CD8-positive, alpha-beta T cell (primary cell): ENCODE measurements at regions of chr2 and their contacts with region 1.

Region 1: GRCh38 chr2:240851078-240851991 is 17.3 kb upstream of the AGXT start:
- DNase-seq: peak; percentile 73 to 91 (median 81)
- ATAC-seq: peak; percentile 95
- H3K4me3 ChIP-seq: no peak overlapping the region
- H3K4me3 Mint-ChIP-seq: no peak overlapping the region
- H3K27ac ChIP-seq: no peak overlapping the region
- H3K27ac Mint-ChIP-seq: no peak overlapping the region
- H3K4me1 ChIP-seq: no peaks in the 10 kb centered on the region
- H3K4me1 Mint-ChIP-seq: no peaks in the 10 kb centered on the region
- H3K27me3 ChIP-seq: peaks cover 0 to 2% of the 10 kb centered on the region in 2 experiments
- H3K27me3 Mint-ChIP-seq: peaks cover 4% of the 10 kb centered on the region
- CTCF ChIP-seq: peak; percentile 91

Region 2: GRCh38 chr2:240704651-240705050 is 146.7 kb before region 1 on chr2:
- CTCF ChIA-PET with region 1: no interaction called
- POLR2A ChIA-PET with region 1: no interaction called
- intact Hi-C with region 1: no loop called
- DNase-seq: peak in 5 of 9 experiments; percentile 39 to 65 (median 46)
- ATAC-seq: peak; percentile 63
- H3K4me3 ChIP-seq: peak overlapping the region in 1 of 2 experiments; percentile 41
- H3K4me3 Mint-ChIP-seq: peak overlapping the region; percentile 47
- H3K27ac ChIP-seq: no peak overlapping the region
- H3K27ac Mint-ChIP-seq: no peak overlapping the region
- H3K4me1 ChIP-seq: peaks cover 20% of the 10 kb centered on the region
- H3K4me1 Mint-ChIP-seq: peaks cover 14% of the 10 kb centered on the region
- H3K27me3 ChIP-seq: no peaks in the 10 kb centered on the region
- H3K27me3 Mint-ChIP-seq: peaks cover 9% of the 10 kb centered on the region
- CTCF ChIP-seq: no peak

Region 3: GRCh38 chr2:240840435-240841080 is 10.8 kb before region 1 on chr2:
- CTCF ChIA-PET with region 1: interaction called, 14 read pairs
- POLR2A ChIA-PET with region 1: no interaction called
- intact Hi-C with region 1: no loop called
- DNase-seq: peak in 3 of 9 experiments; percentile 27 to 49 (median 30)
- ATAC-seq: no peak
- H3K4me3 ChIP-seq: no peak overlapping the region
- H3K4me3 Mint-ChIP-seq: no peak overlapping the region
- H3K27ac ChIP-seq: no peak overlapping the region
- H3K27ac Mint-ChIP-seq: no peak overlapping the region
- H3K4me1 ChIP-seq: no peaks in the 10 kb centered on the region
- H3K4me1 Mint-ChIP-seq: no peaks in the 10 kb centered on the region
- H3K27me3 ChIP-seq: no peaks in the 10 kb centered on the region
- H3K27me3 Mint-ChIP-seq: peaks cover 4% of the 10 kb centered on the region
- CTCF ChIP-seq: peak; percentile 33

Region 4: DNA sequence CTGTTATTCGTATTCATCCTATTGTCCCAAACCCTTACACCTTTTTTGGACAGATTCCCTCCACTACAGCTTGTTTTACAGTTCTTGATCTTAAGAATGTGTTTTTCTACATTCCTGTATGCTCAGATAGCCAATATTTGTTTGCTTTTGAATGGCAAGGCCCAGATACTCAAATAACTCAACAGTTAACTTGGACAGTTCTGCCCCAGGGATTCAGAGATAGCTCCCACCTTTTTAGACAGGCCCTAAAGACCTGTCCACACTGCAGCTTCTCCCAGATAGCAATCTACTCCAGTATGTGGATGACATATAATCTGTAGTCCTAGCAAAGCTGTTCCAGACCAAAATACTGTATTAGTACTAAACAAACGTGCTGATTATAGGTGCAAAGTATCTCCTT is 10.2 kb after region 1 on chr2:
- CTCF ChIA-PET with region 1: interaction called, 26 read pairs
- POLR2A ChIA-PET with region 1: no interaction called
- intact Hi-C with region 1: no loop called
- DNase-seq: no peak
- ATAC-seq: no peak
- H3K4me3 ChIP-seq: no peak overlapping the region
- H3K4me3 Mint-ChIP-seq: no peak overlapping the region
- H3K27ac ChIP-seq: no peak overlapping the region
- H3K27ac Mint-ChIP-seq: no peak overlapping the region
- H3K4me1 ChIP-seq: no peaks in the 10 kb centered on the region
- H3K4me1 Mint-ChIP-seq: no peaks in the 10 kb centered on the region
- H3K27me3 ChIP-seq: no peaks in the 10 kb centered on the region
- H3K27me3 Mint-ChIP-seq: no peaks in the 10 kb centered on the region
- CTCF ChIP-seq: no peak

Region 5: GRCh38 chr2:241064008-241064801 is 212.9 kb after region 1 on chr2:
- CTCF ChIA-PET with region 1: no interaction called
- POLR2A ChIA-PET with region 1: no interaction called
- intact Hi-C with region 1: loop called in 1 of 2 experiments (anchors 1 kb)
- DNase-seq: peak; percentile 17 to 69 (median 44)
- ATAC-seq: peak; percentile 86
- H3K4me3 ChIP-seq: peak overlapping the region in 1 of 2 experiments; percentile 35
- H3K4me3 Mint-ChIP-seq: peak overlapping the region; percentile 71
- H3K27ac ChIP-seq: no peak overlapping the region
- H3K27ac Mint-ChIP-seq: peak overlapping the region; percentile 37
- H3K4me1 ChIP-seq: peaks cover 10% of the 10 kb centered on the region
- H3K4me1 Mint-ChIP-seq: peaks cover 6% of the 10 kb centered on the region
- H3K27me3 ChIP-seq: no peaks in the 10 kb centered on the region
- H3K27me3 Mint-ChIP-seq: no peaks in the 10 kb centered on the region
- CTCF ChIP-seq: no peak

Region 6: GRCh38 chr2:241659150-241659739 is 807.9 kb after region 1 on chr2:
- CTCF ChIA-PET with region 1: interaction called, 3 read pairs
- POLR2A ChIA-PET with region 1: no interaction called
- intact Hi-C with region 1: loop called in 1 of 2 experiments (anchors 2 kb)
- DNase-seq: peak in 5 of 9 experiments; percentile 23 to 53 (median 43)
- ATAC-seq: peak; percentile 34
- H3K4me3 ChIP-seq: no peak overlapping the region
- H3K4me3 Mint-ChIP-seq: no peak overlapping the region
- H3K27ac ChIP-seq: no peak overlapping the region
- H3K27ac Mint-ChIP-seq: no peak overlapping the region
- H3K4me1 ChIP-seq: no peaks in the 10 kb centered on the region
- H3K4me1 Mint-ChIP-seq: no peaks in the 10 kb centered on the region
- H3K27me3 ChIP-seq: no peaks in the 10 kb centered on the region
- H3K27me3 Mint-ChIP-seq: no peaks in the 10 kb centered on the region
- CTCF ChIP-seq: no peak

Region 7: DNA sequence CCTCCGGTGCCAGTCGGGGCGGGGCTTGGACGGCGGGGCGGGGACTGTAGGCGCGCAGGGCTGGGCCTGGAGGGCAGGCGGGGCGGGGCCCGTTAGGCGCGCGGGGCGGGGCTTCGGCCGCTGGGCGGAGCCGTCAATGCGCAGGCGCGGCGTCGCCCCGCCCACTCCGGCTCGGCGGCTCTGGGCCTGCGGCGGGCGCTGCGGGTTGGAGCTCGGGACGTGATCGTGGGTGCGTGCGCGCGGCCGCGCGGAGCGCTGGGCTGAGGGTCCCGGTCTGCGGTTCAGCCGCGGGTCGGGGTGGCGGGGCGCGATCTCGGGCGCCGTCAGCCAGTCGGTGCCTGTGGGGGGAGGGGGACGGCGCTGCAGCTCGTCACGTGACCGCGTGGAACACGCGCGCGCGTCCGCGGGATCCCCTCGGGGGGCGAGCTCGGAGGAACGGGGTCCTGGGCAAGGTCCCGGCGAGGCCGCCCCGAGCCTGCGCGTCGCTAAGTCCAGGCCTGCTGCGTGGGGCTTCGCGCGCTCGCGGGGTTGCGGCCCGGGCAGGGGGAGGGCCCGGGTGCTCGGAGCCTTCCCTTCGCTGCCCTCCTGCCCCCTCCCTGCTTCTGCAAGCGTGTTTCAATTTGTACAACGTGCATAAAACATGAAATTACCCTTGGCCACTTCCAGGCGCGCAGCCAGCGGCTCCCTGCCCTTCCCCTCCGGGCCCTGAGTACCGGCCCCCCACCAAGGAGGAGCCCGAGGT is 883.3 kb after region 1 on chr2 and contains the start of gene D2HGDH:
- CTCF ChIA-PET with region 1: interaction called, 4 read pairs
- POLR2A ChIA-PET with region 1: no interaction called
- intact Hi-C with region 1: loop called (anchors 5 kb)
- DNase-seq: peak; percentile 84 to 97 (median 94)
- ATAC-seq: peak; percentile 92
- H3K4me3 ChIP-seq: peak within 1 kb of the TSS; percentile 68 to 70
- H3K4me3 Mint-ChIP-seq: peak within 1 kb of the TSS; percentile 86
- H3K27ac ChIP-seq: peak within 1 kb of the TSS; percentile 26 to 65
- H3K27ac Mint-ChIP-seq: peak within 1 kb of the TSS; percentile 85
- H3K4me1 ChIP-seq: peaks cover 22% of the 10 kb centered on the region
- H3K4me1 Mint-ChIP-seq: peaks cover 25% of the 10 kb centered on the region
- H3K27me3 ChIP-seq: no peaks in the 10 kb centered on the region
- H3K27me3 Mint-ChIP-seq: no peaks in the 10 kb centered on the region
- CTCF ChIP-seq: no peak
- total RNA-seq, gene D2HGDH: 41.6 to 46.4 TPM